OCI-LY7 (cell line): ENCODE measurements at regions of chr17 and their contacts with region 1.

Region 1: DNA sequence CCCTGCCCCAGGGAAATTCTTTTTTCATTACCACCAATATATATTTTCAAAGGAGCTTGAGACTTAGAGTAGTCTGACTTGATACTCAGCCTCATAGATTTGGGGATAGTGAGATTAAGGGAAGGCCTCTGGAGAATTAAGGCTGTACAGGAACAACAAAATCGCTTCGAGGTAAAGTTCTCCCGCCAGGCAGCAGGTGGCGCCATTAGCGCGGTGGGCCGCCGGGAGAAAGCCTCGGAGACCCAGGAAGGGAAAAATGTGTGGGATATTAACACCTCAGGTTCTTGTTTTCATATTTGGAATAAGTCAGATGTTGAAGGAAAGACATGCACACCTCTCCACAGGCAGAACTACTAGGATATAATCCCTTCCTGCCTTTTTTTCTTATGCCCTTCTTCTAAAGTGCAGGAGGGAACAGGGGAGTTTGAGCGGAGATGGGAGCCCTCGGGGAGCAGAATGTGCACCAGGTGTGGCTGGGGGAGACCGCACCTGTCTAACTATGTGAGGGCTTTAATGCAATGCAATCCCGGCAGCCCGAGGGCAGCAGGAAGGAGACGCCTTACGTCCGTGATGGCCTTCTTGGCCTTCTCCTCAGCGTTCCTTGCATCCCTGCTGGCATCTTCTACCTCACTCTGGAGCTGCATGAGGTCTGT is 25.9 kb downstream of the MYH3 start:
- DNase-seq: no peak
- H3K4me3 ChIP-seq: no peak overlapping the region
- H3K27ac ChIP-seq: no peak overlapping the region
- H3K4me1 ChIP-seq: peaks cover 22% of the 10 kb centered on the region
- CTCF ChIP-seq: peak; percentile 93

Region 2: DNA sequence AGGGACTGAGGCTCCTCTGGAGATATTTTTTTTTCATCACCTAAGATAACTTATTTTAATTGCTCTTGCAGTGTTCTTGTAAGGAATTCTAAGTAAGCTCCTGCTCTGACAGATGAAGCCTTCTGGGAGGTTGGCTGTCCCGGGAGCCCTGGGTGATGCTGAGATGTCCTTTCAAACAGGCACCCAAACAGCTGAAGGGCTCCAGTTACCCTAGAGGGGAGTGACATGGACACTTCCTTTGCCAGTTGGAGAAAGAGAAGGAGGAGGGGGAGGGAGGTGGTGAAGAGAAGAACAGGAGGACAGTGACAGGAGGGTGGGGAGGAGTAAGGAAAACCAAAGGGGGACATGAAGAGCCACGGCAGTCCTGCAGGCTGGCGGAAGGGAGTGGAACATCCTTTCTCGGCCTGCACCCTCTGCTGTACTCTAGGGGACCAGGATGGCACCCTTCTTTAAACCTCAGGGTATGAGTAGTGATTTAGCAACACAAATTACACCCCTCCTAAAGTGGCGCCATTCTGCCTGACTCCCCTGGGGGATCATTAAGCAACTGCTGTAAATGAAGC is 25.9 kb before region 1 on chr17:
- CTCF ChIA-PET with region 1: no interaction called
- POLR2A ChIA-PET with region 1: no interaction called
- intact Hi-C with region 1: no loop called
- DNase-seq: no peak
- H3K4me3 ChIP-seq: no peak overlapping the region
- H3K27ac ChIP-seq: no peak overlapping the region
- H3K4me1 ChIP-seq: no peaks in the 10 kb centered on the region
- CTCF ChIP-seq: no peak

Region 3: DNA sequence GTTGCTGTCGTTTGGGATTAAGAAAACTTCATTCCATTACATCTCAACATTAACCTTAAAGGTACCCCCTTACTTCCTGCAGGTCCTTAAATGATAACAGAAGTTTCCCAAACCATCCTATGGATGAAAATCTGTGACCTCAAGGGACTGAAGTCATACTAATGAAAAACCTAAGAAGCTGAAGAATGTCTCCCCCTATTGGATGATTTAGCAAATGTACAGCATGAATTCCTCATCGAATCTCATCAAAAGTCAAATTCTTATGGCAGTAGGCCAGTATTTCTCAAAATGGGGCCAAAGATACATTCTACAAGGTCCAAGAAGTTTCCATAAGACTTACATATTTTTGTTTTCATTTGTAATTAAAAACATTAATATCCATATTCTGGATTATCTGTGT is 52.7 kb after region 1 on chr17:
- CTCF ChIA-PET with region 1: no interaction called
- POLR2A ChIA-PET with region 1: no interaction called
- intact Hi-C with region 1: loop called (anchors 5 kb)
- DNase-seq: peak; percentile 33
- H3K4me3 ChIP-seq: no peak overlapping the region
- H3K27ac ChIP-seq: no peak overlapping the region
- H3K4me1 ChIP-seq: no peaks in the 10 kb centered on the region
- CTCF ChIP-seq: peak; percentile 81